AG04449 (cell line): ENCODE measurements at regions of chr9 and their contacts with region 1.

Region 1: DNA sequence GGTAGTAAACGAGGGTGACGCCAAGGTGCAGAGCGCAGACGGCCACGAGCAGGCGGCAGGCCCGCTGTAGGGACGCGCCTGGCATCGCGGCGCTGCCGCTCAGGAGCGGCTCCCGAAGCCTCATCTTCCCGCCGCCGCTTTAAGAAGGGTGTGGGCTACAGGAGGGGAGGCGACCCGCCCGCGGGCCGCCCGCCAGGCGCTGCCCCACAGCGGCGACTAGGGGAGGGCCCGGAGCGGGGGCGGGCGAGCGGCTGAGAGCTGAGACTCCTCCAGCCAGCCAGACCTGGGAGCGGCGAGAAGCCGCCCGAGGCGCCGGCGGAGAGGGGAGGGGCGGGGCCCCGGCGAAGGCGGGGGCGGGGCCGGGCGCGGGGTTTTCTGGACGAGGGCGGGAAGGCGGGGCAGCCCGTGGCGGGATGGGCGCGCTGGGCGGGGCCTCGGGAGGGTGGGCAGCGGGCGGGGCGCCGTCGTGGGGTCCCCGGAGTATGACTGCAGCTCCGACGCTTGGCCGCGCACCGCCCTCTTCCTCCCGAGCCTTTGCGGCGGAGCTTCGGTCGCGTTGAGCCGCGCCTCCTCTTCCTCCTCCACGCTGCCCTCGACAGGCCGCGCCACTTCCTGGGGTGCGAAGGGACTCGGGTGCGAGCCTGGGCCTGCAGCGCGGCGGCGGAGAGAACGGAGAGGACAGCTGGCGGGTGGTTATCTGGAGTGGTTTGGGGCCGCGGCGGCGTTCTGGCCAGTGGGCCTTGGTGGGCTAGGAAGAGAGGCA is at the start of gene B4GALT1:
- DNase-seq: no peak
- H3K4me3 ChIP-seq: peak within 1 kb of the TSS; percentile 92
- CTCF ChIP-seq: no peak

Region 2: DNA sequence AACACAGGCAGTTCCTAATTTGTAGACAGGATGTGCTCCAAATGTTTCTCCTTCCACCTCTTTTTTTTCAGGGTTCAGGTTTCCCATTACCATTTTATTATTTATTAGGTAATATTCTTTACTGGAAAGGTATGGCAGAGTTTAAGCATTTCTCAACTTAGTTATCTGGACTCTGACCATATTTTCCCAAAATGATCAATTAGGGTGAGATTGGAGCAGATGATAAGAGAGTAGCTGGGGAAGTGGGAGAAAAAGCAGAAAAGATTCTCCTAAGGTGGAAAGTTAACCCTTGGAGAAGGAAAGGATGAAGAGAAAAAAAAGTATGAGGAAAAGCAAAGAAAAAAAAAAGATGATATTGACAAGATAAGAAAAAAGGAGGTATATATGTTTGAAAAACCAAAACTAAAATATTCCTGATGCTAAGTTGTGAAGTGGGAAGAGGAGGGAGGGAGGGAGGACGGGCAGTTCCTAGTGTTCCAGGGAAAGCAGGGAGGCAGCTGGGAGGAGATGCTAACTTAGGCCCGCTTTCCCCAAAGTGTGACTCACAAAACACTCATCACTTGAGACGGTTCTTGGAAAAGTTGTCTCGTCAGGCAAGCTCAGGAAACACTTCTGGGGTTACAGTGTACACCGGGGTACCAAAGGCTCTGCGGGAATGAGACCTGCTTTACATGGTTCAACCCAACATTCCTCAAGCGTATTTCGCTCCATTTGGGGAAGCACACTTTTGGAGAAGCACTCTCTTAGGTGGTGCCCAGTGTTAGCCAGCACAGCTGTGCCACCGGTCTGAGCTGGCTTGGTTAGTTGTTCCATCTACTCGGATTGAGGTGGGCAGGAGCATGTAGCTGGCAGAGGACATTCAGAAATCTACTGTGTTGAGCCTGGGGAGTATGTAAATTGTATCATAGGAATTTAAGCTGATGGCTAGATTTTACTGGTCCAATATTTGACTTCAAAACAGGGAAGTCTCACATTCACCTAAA is 35.1 kb before region 1 on chr9:
- CTCF ChIA-PET with region 1: interaction called, 5 read pairs
- POLR2A ChIA-PET with region 1: interaction called, 11 read pairs
- DNase-seq: no peak
- H3K4me3 ChIP-seq: no peak overlapping the region
- CTCF ChIP-seq: no peak

Region 3: GRCh38 chr9:33177639-33178038 is 10.4 kb after region 1 on chr9:
- CTCF ChIA-PET with region 1: interaction called, 16 read pairs
- POLR2A ChIA-PET with region 1: interaction called, 5 read pairs
- DNase-seq: no peak
- H3K4me3 ChIP-seq: no peak overlapping the region
- CTCF ChIP-seq: no peak